MCF 10A (cell line): ENCODE measurements at regions of chr10 and their contacts with region 1.

Region 1: GRCh38 chr10:132665946-132666704 is 119.8 kb downstream of the NKX6-2 start:
- DNase-seq: peak; percentile 91
- H3K4me3 Mint-ChIP-seq: peak overlapping the region; percentile 69
- H3K27ac Mint-ChIP-seq: peak overlapping the region; percentile 82
- H3K4me1 Mint-ChIP-seq: peaks cover 21% of the 10 kb centered on the region
- H3K27me3 Mint-ChIP-seq: no peaks in the 10 kb centered on the region
- CTCF ChIP-seq: no peak

Region 2: GRCh38 chr10:132714096-132714721 is 48.1 kb after region 1 on chr10:
- CTCF ChIA-PET with region 1: no interaction called
- POLR2A ChIA-PET with region 1: no interaction called
- intact Hi-C with region 1: no loop called
- DNase-seq: no peak
- H3K4me3 Mint-ChIP-seq: no peak overlapping the region
- H3K27ac Mint-ChIP-seq: no peak overlapping the region
- H3K4me1 Mint-ChIP-seq: no peaks in the 10 kb centered on the region
- H3K27me3 Mint-ChIP-seq: no peaks in the 10 kb centered on the region
- CTCF ChIP-seq: no peak

Region 3: DNA sequence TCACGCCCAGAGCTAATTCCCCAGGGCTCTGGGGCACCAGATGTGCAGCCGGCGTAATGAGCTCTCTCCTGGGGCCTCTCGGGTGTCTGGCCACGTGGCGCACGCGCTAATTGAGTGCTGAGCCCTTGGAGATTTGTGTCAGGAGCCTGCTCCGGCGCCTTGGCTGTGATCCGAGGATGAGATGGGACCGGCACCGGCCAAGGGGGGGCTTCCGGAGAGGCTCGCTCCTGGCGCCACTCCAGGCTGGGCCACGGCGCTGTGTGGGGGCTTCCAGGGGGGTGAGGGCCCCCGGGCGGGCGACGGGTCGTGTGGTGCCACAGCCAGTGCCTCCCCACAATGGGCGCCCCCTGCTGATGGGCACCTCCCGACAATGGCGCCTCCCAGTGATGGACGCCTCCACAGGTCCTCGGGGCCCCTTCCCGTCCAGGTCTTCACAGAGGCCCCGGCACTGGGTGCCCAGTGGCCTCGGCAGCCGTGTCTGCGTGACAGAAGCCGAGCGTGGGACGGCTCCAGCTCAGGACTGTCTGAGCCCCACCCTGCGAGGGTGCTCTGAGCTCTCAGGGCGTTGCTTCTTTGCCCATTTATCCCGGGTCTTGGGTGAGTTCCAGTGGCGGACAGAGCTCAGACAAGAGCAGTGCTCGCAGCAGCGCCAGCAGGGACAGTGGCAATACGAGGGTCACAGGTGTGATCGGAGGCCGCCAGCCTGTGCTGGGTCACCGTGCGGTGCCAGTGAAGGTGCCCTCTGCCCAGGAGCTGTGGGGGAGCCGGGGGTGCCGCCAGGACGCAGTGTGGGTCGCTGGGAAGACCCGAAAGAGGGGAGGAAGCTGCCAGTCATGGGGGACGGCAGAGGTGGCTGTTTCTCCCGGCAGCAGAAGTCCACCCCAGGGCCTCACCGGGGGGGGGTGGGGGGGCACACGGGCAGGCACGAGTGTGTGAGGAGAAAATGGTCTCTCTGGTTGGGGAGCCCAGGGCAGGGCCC is 128.0 kb after region 1 on chr10:
- CTCF ChIA-PET with region 1: no interaction called
- POLR2A ChIA-PET with region 1: no interaction called
- intact Hi-C with region 1: loop called (anchors 10 kb)
- DNase-seq: no peak
- H3K4me3 Mint-ChIP-seq: no peak overlapping the region
- H3K27ac Mint-ChIP-seq: no peak overlapping the region
- H3K4me1 Mint-ChIP-seq: no peaks in the 10 kb centered on the region
- H3K27me3 Mint-ChIP-seq: no peaks in the 10 kb centered on the region
- CTCF ChIP-seq: no peak

Region 4: GRCh38 chr10:133067149-133068105 is 401.3 kb after region 1 on chr10:
- CTCF ChIA-PET with region 1: no interaction called
- POLR2A ChIA-PET with region 1: no interaction called
- intact Hi-C with region 1: no loop called
- DNase-seq: no peak
- H3K4me3 Mint-ChIP-seq: no peak overlapping the region
- H3K27ac Mint-ChIP-seq: no peak overlapping the region
- H3K4me1 Mint-ChIP-seq: no peaks in the 10 kb centered on the region
- H3K27me3 Mint-ChIP-seq: no peaks in the 10 kb centered on the region
- CTCF ChIP-seq: no peak